Thyroid gland (tissue), 4 donors: ENCODE measurements at regions of chr22 and their contacts with region 1.

Region 1: DNA sequence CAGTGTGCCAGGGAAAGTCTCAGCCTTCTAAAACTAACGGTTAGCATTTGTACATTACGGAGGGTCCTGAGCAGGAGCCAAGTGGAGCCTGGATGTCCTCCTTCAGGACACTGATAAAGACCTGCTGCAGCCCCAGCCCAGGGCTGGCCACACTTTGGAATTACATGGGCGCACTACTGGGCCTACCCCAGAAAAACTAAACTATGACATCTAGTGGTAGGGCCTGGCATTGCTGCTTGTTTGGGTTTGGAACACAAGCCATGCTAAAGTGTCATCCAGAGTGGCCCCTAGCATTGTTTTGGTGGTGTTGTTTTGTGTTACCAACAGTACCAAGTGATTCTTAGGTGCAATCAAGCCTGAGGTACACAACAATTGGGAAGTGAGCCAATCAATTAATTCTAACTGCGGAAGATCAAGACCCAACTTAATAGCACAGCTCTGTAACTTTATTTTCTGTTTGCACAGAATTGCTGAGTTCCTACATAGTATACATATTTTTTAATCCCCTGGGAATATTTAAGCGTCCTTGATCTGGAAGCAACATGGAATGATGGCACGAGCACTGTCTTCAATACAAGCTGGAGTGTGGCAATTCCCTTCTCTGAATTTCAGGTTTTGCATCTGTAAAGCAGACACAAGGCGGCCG is 340.7 kb downstream of the LARGE1 start:
- DNase-seq: peak; percentile 34 to 40
- H3K4me3 ChIP-seq: no peak overlapping the region
- H3K27ac ChIP-seq: no peak overlapping the region
- H3K4me1 ChIP-seq: no peaks in the 10 kb centered on the region
- H3K27me3 ChIP-seq: no peaks in the 10 kb centered on the region
- CTCF ChIP-seq: peak; percentile 52 to 87 (median 70)
- POLR2A ChIP-seq: no peak

Region 2: GRCh38 chr22:32341122-32341740 is 1238.3 kb before region 1 on chr22:
- intact Hi-C with region 1: no loop called
- DNase-seq: peak; percentile 75 to 79
- H3K4me3 ChIP-seq: no peak overlapping the region
- H3K27ac ChIP-seq: peak overlapping the region in 2 of 3 donors; percentile 1 to 79
- H3K4me1 ChIP-seq: peaks cover 14 to 50% of the 10 kb centered on the region in 2 donors
- H3K27me3 ChIP-seq: no peaks in the 10 kb centered on the region
- CTCF ChIP-seq: no peak
- POLR2A ChIP-seq: no peak

Region 3: GRCh38 chr22:33302049-33302545 is 277.5 kb before region 1 on chr22:
- intact Hi-C with region 1: loop called (anchors 5 kb)
- DNase-seq: peak; percentile 74 to 78
- H3K4me3 ChIP-seq: no peak overlapping the region
- H3K27ac ChIP-seq: no peak overlapping the region
- H3K4me1 ChIP-seq: peaks cover 13 to 14% of the 10 kb centered on the region in 2 donors
- H3K27me3 ChIP-seq: no peaks in the 10 kb centered on the region
- CTCF ChIP-seq: peak; percentile 72 to 96 (median 86)
- POLR2A ChIP-seq: no peak

Region 4: GRCh38 chr22:33519071-33519973 is 60.2 kb before region 1 on chr22:
- intact Hi-C with region 1: loop called (anchors 2 kb)
- DNase-seq: no peak
- H3K4me3 ChIP-seq: no peak overlapping the region
- H3K27ac ChIP-seq: no peak overlapping the region
- H3K4me1 ChIP-seq: peaks cover 0 to under 1% of the 10 kb centered on the region in 2 donors
- H3K27me3 ChIP-seq: no peaks in the 10 kb centered on the region
- CTCF ChIP-seq: peak in 5 of 6 experiments; percentile 28 to 58 (median 51)
- POLR2A ChIP-seq: no peak